Transverse colon (tissue), 4 donors: ENCODE measurements at regions of chr1 and their contacts with region 1.

Region 1: GRCh38 chr1:153510984-153511410 is 24.8 kb downstream of the S100A6 start:
- DNase-seq: peak; percentile 89
- H3K4me3 ChIP-seq: no peak overlapping the region
- H3K27ac ChIP-seq: peak overlapping the region in 1 of 4 donors; percentile 8
- H3K4me1 ChIP-seq: peaks cover 10 to 43% (median 13%) of the 10 kb centered on the region in 4 donors
- H3K27me3 ChIP-seq: no peaks in the 10 kb centered on the region
- CTCF ChIP-seq: peak; percentile 85 to 95 (median 91)
- EP300 ChIP-seq: no peak
- POLR2A ChIP-seq: no peak

Region 2: GRCh38 chr1:153485863-153486262 is 25.1 kb before region 1 on chr1:
- in situ Hi-C with region 1: no loop called
- intact Hi-C with region 1: no loop called
- DNase-seq: no peak
- H3K4me3 ChIP-seq: no peak overlapping the region
- H3K27ac ChIP-seq: no peak overlapping the region
- H3K4me1 ChIP-seq: peaks cover 3 to 6% (median 4%) of the 10 kb centered on the region in 4 donors
- H3K27me3 ChIP-seq: no peaks in the 10 kb centered on the region
- CTCF ChIP-seq: no peak
- EP300 ChIP-seq: no peak
- POLR2A ChIP-seq: no peak

Region 3: GRCh38 chr1:153545067-153546055 is 34.4 kb after region 1 on chr1 and contains the start of gene S100A4:
- in situ Hi-C with region 1: no loop called
- intact Hi-C with region 1: loop called (anchors 1 kb)
- DNase-seq: peak; percentile 97
- H3K4me3 ChIP-seq: peak within 1 kb of the TSS in 3 of 4 donors; percentile 8 to 39 (median 35)
- H3K27ac ChIP-seq: peak within 1 kb of the TSS; percentile 84 to 92 (median 90)
- H3K4me1 ChIP-seq: peaks cover 48 to 81% (median 61%) of the 10 kb centered on the region in 4 donors
- H3K27me3 ChIP-seq: no peaks in the 10 kb centered on the region
- CTCF ChIP-seq: no peak
- EP300 ChIP-seq: no peak
- POLR2A ChIP-seq: peak; percentile 56
- total RNA-seq, gene S100A4: 40.8 to 138 (median 78.6) TPM

Region 4: GRCh38 chr1:153572569-153573015 is 61.6 kb after region 1 on chr1:
- in situ Hi-C with region 1: loop called in 2 of 4 experiments (anchors 5 kb)
- intact Hi-C with region 1: loop called (anchors 5 kb)
- DNase-seq: peak; percentile 90
- H3K4me3 ChIP-seq: no peak overlapping the region
- H3K27ac ChIP-seq: peak overlapping the region; percentile 29 to 63 (median 59)
- H3K4me1 ChIP-seq: peaks cover 17 to 38% (median 20%) of the 10 kb centered on the region in 4 donors
- H3K27me3 ChIP-seq: no peaks in the 10 kb centered on the region
- CTCF ChIP-seq: peak; percentile 76 to 90 (median 81)
- EP300 ChIP-seq: no peak
- POLR2A ChIP-seq: no peak

Region 5: GRCh38 chr1:153727463-153728304 is 216.7 kb after region 1 on chr1 and contains the start of gene INTS3:
- in situ Hi-C with region 1: loop called in 1 of 4 experiments (anchors 25 kb)
- intact Hi-C with region 1: no loop called
- DNase-seq: peak; percentile 100
- H3K4me3 ChIP-seq: peak within 1 kb of the TSS; percentile 53 to 100 (median 82)
- H3K27ac ChIP-seq: peak within 1 kb of the TSS; percentile 89 to 100 (median 98)
- H3K4me1 ChIP-seq: peaks cover 3 to 26% (median 5%) of the 10 kb centered on the region in 4 donors
- H3K27me3 ChIP-seq: no peaks in the 10 kb centered on the region
- CTCF ChIP-seq: peak in 2 of 5 experiments; percentile 18 to 19
- EP300 ChIP-seq: no peak
- POLR2A ChIP-seq: peak; percentile 70
- total RNA-seq, gene INTS3: 26.1 to 35.6 (median 28.0) TPM

Region 6: DNA sequence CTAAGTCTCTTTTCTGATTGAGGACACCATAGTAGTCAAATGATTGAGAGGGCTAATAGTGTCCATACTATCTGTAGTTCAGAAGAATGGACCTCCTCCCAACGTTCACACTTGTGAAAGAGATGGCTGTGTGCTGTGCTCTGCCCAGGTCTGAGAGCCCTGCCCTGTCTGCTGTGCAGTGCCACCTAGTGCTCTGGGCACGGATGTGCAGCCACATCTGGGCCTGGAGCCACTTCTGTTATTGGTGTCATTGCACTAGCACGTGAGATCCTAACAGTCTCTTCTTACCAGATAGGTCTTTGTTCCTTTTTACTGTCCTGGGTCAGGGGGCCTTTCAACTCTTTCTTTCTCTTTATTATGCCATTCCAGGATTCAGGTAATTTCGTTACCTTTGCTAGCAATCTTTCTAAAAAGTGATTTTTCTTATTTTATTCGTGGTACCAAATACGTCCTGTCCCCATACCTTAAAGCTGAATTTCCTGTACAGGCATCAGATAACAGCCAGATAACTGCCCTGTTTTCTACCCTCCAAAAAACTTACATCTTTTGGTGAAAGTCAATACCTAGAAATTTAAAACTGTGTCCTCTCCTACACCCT is 238.5 kb after region 1 on chr1:
- in situ Hi-C with region 1: loop called in 2 of 4 experiments (anchors 10 to 25 kb)
- intact Hi-C with region 1: no loop called
- DNase-seq: peak; percentile 89
- H3K4me3 ChIP-seq: no peak overlapping the region
- H3K27ac ChIP-seq: peak overlapping the region in 3 of 4 donors; percentile 15 to 50 (median 36)
- H3K4me1 ChIP-seq: peaks cover 9 to 34% (median 15%) of the 10 kb centered on the region in 4 donors
- H3K27me3 ChIP-seq: no peaks in the 10 kb centered on the region
- CTCF ChIP-seq: peak; percentile 87 to 92 (median 90)
- EP300 ChIP-seq: no peak
- POLR2A ChIP-seq: no peak